B cell (primary cell): ENCODE measurements at regions of chr21 and their contacts with region 1.

Region 1: GRCh38 chr21:43789276-43790009 is at the start of gene RRP1:
- DNase-seq: peak; percentile 97
- ATAC-seq: peak; percentile 99
- H3K4me3 ChIP-seq: peak within 1 kb of the TSS; percentile 60 to 89 (median 79)
- H3K4me3 Mint-ChIP-seq: peak within 1 kb of the TSS; percentile 94
- H3K27ac ChIP-seq: peak within 1 kb of the TSS; percentile 44 to 78
- H3K27ac Mint-ChIP-seq: peak within 1 kb of the TSS; percentile 89
- H3K4me1 ChIP-seq: peaks cover 9 to 21% of the 10 kb centered on the region in 2 donors
- H3K4me1 Mint-ChIP-seq: peaks cover 13% of the 10 kb centered on the region
- H3K27me3 ChIP-seq: no peaks in the 10 kb centered on the region
- H3K27me3 Mint-ChIP-seq: no peaks in the 10 kb centered on the region
- CTCF ChIP-seq: peak; percentile 96
- total RNA-seq, gene RRP1: 27.8 and 28.6 TPM in 2 replicates

Region 2: GRCh38 chr21:43718872-43719747 is 70.3 kb before region 1 on chr21 and contains the start of gene PDXK:
- CTCF ChIA-PET with region 1: interaction called, 3 read pairs
- POLR2A ChIA-PET with region 1: interaction called, 3 read pairs
- intact Hi-C with region 1: loop called (anchors 1 kb)
- DNase-seq: peak; percentile 95
- ATAC-seq: peak; percentile 85
- H3K4me3 ChIP-seq: peak within 1 kb of the TSS; percentile 13 to 88 (median 75)
- H3K4me3 Mint-ChIP-seq: peak within 1 kb of the TSS; percentile 86
- H3K27ac ChIP-seq: peak within 1 kb of the TSS; percentile 55 to 87
- H3K27ac Mint-ChIP-seq: peak within 1 kb of the TSS; percentile 81
- H3K4me1 ChIP-seq: peaks cover 35 to 56% of the 10 kb centered on the region in 2 donors
- H3K4me1 Mint-ChIP-seq: peaks cover 53% of the 10 kb centered on the region
- H3K27me3 ChIP-seq: peaks cover 0 to 23% (median 4%) of the 10 kb centered on the region in 4 experiments
- H3K27me3 Mint-ChIP-seq: no peaks in the 10 kb centered on the region
- CTCF ChIP-seq: peak; percentile 36
- total RNA-seq, gene PDXK: 102 and 108 TPM in 2 replicates

Region 3: DNA sequence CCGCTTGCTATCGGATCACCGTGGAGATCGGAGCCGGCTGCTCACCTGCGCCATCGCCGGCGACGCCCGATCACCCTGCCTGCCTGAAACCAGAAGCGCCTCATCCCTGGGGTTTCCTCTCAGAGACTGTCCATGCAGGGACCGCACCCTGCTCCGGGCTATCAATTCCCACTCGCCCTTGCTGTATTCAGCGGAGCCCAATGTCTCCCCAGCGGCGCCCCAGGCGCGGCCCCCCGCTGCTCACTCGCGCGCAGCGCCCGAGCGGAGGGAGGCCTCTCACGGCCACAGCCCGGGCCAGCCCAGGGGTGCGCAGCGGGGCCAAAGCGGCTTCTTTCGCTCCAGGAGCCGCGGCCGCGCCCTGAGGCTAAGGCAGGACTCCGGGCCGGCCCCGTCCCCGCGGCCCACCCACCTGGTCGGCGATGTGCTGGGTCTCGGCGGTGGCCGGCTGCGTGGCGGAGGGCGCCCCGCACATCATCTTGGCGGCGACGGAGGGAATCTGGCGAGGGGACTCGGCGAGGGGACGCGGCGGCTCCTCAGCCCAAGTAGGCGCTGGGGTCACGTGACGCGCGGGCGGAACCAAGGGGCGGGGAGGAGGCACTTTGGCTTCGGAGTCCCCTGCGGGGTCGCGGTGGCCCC is 13.5 kb before region 1 on chr21 and contains the start of gene CSTB:
- CTCF ChIA-PET with region 1: interaction called, 3 read pairs
- POLR2A ChIA-PET with region 1: no interaction called
- intact Hi-C with region 1: loop called (anchors 1 kb)
- DNase-seq: peak; percentile 83
- ATAC-seq: peak; percentile 78
- H3K4me3 ChIP-seq: peak within 1 kb of the TSS; percentile 43 to 87 (median 59)
- H3K4me3 Mint-ChIP-seq: peak within 1 kb of the TSS; percentile 92
- H3K27ac ChIP-seq: peak within 1 kb of the TSS in 1 of 2 donors; percentile 76
- H3K27ac Mint-ChIP-seq: peak within 1 kb of the TSS; percentile 83
- H3K4me1 ChIP-seq: peaks cover 10 to 14% of the 10 kb centered on the region in 2 donors
- H3K4me1 Mint-ChIP-seq: peaks cover 28% of the 10 kb centered on the region
- H3K27me3 ChIP-seq: no peaks in the 10 kb centered on the region
- H3K27me3 Mint-ChIP-seq: no peaks in the 10 kb centered on the region
- CTCF ChIP-seq: no peak
- total RNA-seq, gene CSTB: 14.0 and 15.6 TPM in 2 replicates

Region 4: DNA sequence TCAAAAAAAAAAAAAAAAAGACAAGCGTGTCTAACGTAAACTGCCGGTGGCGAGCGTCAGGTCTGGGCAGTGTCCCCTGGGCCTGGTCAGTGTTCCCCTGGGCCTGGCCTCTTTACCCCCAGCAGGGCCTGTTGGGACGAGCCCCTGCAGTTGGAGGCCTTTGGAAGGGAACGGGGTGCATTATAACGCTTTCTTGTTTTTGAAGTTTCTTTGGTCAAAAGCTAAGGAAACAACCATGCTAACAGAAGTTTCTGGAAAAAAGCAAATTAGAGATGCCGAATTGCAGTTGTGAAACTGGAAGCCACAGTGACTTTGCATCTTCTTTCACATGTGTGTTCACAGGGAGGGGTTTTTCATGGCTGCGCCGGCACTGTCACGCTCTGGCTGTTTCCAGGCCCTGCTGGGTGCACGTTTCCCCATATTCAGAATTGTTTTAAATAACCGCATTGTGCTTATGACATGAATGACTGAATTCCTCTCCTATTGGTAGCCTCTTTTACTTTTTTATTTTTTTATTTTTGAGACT is 15.9 kb after region 1 on chr21:
- CTCF ChIA-PET with region 1: interaction called, 6 read pairs
- POLR2A ChIA-PET with region 1: no interaction called
- intact Hi-C with region 1: loop called (anchors 1 kb)
- DNase-seq: peak; percentile 95
- ATAC-seq: peak; percentile 98
- H3K4me3 ChIP-seq: peak overlapping the region in 1 of 5 experiments; percentile 16
- H3K4me3 Mint-ChIP-seq: peak overlapping the region; percentile 77
- H3K27ac ChIP-seq: peak overlapping the region; percentile 6 to 78
- H3K27ac Mint-ChIP-seq: peak overlapping the region; percentile 84
- H3K4me1 ChIP-seq: peaks cover 26 to 42% of the 10 kb centered on the region in 2 donors
- H3K4me1 Mint-ChIP-seq: peaks cover 22% of the 10 kb centered on the region
- H3K27me3 ChIP-seq: peaks cover 0 to 11% (median 2%) of the 10 kb centered on the region in 4 experiments
- H3K27me3 Mint-ChIP-seq: no peaks in the 10 kb centered on the region
- CTCF ChIP-seq: no peak

Region 5: DNA sequence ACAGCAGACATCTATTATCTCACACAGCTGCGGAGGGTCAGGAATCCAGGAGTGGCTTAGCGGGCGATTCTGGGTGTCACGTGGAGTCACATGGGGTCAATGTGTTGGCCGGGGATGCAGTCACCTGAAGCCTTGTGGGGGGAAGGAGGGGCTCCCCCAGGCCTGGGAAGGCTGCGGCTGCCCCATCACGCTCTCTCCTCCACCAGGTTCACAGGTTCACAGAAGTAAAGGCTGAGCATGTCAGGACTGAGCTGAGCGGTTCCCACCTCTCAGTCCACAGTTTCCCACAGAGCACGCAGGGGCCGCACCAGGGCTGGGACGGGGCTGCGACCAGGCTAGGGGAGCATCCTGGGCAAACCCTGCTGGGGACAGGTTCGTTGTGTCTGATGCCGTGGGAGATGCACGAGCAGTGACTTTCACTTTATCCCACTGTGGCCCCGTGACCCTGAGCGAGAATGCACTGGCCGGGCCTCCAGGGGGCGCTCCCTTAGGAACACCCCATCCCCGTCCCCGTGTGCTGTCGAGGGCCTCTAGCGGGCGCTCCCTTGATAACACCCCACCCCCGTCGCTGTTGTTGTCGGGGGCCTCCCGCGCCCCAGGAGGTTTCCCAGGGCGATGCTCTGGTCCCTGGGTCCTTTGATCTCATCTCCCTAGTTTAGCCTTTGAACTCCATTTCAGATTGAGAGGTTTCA is 149.5 kb after region 1 on chr21:
- CTCF ChIA-PET with region 1: interaction called, 4 read pairs
- POLR2A ChIA-PET with region 1: interaction called, 10 read pairs
- intact Hi-C with region 1: loop called (anchors 1 kb)
- DNase-seq: peak; percentile 91
- ATAC-seq: peak; percentile 96
- H3K4me3 ChIP-seq: peak overlapping the region in 4 of 5 experiments; percentile 56 to 71 (median 66)
- H3K4me3 Mint-ChIP-seq: peak overlapping the region; percentile 95
- H3K27ac ChIP-seq: peak overlapping the region in 1 of 2 donors; percentile 41
- H3K27ac Mint-ChIP-seq: peak overlapping the region; percentile 82
- H3K4me1 ChIP-seq: peaks cover 9 to 23% of the 10 kb centered on the region in 2 donors
- H3K4me1 Mint-ChIP-seq: peaks cover 20% of the 10 kb centered on the region
- H3K27me3 ChIP-seq: no peaks in the 10 kb centered on the region
- H3K27me3 Mint-ChIP-seq: no peaks in the 10 kb centered on the region
- CTCF ChIP-seq: peak; percentile 99

Region 6: GRCh38 chr21:43975495-43975993 is 186.1 kb after region 1 on chr21:
- CTCF ChIA-PET with region 1: interaction called, 3 read pairs
- POLR2A ChIA-PET with region 1: no interaction called
- intact Hi-C with region 1: loop called (anchors 1 kb)
- DNase-seq: peak; percentile 83
- ATAC-seq: peak; percentile 97
- H3K4me3 ChIP-seq: no peak overlapping the region
- H3K4me3 Mint-ChIP-seq: no peak overlapping the region
- H3K27ac ChIP-seq: no peak overlapping the region
- H3K27ac Mint-ChIP-seq: no peak overlapping the region
- H3K4me1 ChIP-seq: peaks cover 0 to 6% of the 10 kb centered on the region in 2 donors
- H3K4me1 Mint-ChIP-seq: peaks cover 8% of the 10 kb centered on the region
- H3K27me3 ChIP-seq: no peaks in the 10 kb centered on the region
- H3K27me3 Mint-ChIP-seq: no peaks in the 10 kb centered on the region
- CTCF ChIP-seq: peak; percentile 93